ENCODE measurements at regions of chr6 and their contacts with region 1.

Region 1: DNA sequence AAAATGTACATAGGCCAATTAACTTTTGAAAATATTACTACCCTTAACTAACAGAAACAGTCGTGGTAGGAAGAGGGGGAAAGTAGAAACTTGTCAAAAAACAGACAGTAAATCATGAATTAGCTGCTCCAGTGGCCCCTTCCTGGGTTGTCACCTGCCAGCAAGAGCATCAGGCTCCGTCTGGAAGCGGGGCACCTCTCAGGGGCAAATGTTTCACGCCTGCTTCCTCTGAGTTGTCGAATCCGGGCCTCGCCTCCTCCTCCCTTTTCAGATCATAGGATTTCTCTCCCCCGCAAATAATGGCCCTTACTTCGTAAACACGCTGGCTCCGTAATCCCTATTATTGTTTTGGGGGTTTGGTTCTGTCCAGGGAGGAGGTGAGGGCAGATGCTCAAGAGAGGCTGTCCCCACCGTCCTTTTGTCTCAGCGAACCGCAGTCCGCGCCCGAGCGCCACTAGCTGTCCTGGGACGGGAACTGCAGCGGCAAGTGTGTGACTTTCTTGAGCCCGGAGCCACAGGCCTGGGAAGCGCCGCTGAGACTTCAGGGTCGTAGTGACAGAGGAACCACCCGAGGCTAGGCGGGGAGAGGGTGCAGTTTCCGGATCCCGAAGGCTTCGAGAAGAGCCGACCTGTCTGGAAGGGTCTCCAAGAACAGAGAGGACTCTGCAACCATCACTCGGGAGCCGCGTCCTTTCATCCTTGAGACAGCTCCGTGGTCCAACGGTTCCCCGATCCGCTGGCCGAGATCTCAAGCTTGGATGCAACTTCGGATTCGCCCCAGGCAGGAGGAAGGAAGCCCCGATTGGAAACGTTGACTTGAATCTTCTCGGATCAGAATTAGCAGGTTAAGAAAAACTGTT is 214.5 kb upstream of the ZNF184 start:
- DNase-seq: peak; percentile 86
- ATAC-seq: peak; percentile 78
- H3K4me3 ChIP-seq: peak overlapping the region; percentile 83
- H3K27ac ChIP-seq: 0 out of 2 replicates have a peak overlapping the region, but pooled peaks have one; percentile 7
- H3K4me1 ChIP-seq: no peaks in the 10 kb centered on the region
- H3K27me3 ChIP-seq: no peaks in the 10 kb centered on the region
- CTCF ChIP-seq: peak; percentile 90

Region 2: DNA sequence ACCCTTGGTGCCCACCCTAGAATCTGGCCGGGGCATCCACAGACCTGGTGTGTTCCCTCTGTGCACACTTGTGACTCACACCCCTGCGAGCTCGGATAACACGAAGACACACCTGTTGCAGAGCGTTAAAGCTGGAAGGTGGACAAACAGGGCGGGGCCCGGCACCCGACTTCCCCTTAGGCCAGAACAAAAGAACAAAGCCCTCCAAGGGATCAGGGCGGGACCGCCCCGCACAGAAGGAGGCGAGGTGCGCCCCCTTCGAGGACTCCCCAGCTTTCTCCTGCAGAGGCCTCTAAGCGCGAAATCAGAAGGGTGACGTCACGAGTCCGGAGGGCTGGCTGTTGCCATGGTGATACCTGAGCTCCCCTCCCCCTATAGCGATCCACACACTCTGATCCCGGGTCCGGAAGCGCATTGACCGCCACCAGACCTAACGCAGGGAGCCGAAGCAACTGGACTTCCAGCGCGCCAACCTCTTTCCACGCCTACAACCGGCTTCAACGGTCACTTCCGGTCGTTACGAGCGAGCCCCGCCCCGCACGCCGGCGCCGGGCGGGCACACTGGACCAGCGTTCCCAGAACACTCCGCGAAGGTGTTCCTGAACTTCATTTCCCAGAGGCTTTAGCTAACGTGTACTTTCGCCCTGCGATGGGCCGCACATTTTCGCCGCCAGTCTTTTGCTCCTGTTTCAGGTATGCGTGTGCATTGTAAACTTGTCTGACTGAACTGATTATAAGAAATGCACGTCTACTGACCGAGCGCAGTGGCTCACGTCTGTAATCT is 214.6 kb before region 1 on chr6 and contains the start of gene ZNF184:
- CTCF ChIA-PET with region 1: no interaction called
- POLR2A ChIA-PET with region 1: no interaction called
- intact Hi-C with region 1: loop called (anchors 10 kb)
- DNase-seq: peak; percentile 98
- ATAC-seq: peak; percentile 88
- H3K4me3 ChIP-seq: peak within 1 kb of the TSS; percentile 93
- H3K27ac ChIP-seq: peak within 1 kb of the TSS; percentile 86
- H3K4me1 ChIP-seq: peaks cover 26% of the 10 kb centered on the region
- H3K27me3 ChIP-seq: no peaks in the 10 kb centered on the region
- CTCF ChIP-seq: no peak
- total RNA-seq, gene ZNF184: 7.0 and 10.2 TPM in 2 replicates

Region 3: GRCh38 chr6:27617700-27618689 is 69.4 kb before region 1 on chr6:
- CTCF ChIA-PET with region 1: interaction called, 4 read pairs
- POLR2A ChIA-PET with region 1: no interaction called
- intact Hi-C with region 1: loop called (anchors 2 kb)
- DNase-seq: peak; percentile 73
- ATAC-seq: peak; percentile 91
- H3K4me3 ChIP-seq: peak overlapping the region; percentile 84
- H3K27ac ChIP-seq: no peak overlapping the region
- H3K4me1 ChIP-seq: peaks cover 8% of the 10 kb centered on the region; the same call in 1 of the 2 replicates
- H3K27me3 ChIP-seq: no peaks in the 10 kb centered on the region
- CTCF ChIP-seq: peak; percentile 42

Region 4: GRCh38 chr6:27650620-27651370 is 36.6 kb before region 1 on chr6:
- CTCF ChIA-PET with region 1: no interaction called
- POLR2A ChIA-PET with region 1: no interaction called
- intact Hi-C with region 1: loop called (anchors 1 kb)
- DNase-seq: peak; percentile 92
- ATAC-seq: peak; percentile 91
- H3K4me3 ChIP-seq: peak overlapping the region; percentile 76
- H3K27ac ChIP-seq: no peak overlapping the region
- H3K4me1 ChIP-seq: no peaks in the 10 kb centered on the region; the same call in 1 of the 2 replicates
- H3K27me3 ChIP-seq: no peaks in the 10 kb centered on the region
- CTCF ChIP-seq: peak; percentile 54